ENCODE measurements at regions of chr9 and their contacts with region 1.

Region 1: DNA sequence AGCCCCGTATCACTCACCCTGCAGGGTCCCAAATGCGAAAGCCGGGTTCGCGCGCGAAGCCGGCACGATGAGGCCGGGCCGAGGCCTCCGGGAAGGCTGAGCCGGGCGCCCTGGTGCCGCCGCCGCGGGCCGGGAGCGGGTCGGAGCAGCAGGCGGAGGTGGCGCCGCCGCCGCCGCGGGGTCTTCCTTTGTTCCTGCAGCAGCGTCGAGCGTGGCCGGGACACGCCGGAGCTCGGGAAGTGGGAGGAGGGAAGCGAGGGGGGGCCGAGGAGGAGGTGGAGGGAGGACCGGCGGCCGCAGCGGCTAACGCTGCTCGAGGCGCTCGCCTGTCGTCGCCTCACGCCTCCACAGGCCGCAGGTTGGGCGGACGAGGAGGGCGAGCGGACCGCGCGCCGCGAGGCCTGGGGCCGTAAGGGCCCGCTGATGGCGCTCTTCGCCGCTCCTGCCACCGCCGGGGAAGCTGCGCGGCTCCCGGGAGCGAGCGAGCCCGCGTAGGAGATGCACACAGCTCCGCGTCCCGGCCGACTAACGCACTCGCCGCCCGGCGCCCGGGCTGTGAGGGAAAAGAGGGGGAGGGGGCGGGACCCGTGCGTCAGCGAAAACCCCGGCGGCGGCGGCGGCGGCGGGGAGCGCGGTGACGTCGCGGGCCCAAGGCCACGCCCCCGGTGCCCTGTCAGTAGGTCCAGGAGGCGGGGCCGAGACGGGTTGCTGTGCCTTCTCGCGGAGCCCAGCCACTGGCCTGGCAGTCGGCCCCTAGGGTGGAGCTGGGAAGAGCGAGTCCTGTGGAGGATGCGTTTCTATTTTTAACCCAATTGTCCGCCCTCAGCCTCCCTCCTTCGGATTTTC is at the start of gene ZFAND5:
- DNase-seq: peak; percentile 100
- total RNA-seq, gene ZFAND5: 141 to 175 TPM

Region 2: DNA sequence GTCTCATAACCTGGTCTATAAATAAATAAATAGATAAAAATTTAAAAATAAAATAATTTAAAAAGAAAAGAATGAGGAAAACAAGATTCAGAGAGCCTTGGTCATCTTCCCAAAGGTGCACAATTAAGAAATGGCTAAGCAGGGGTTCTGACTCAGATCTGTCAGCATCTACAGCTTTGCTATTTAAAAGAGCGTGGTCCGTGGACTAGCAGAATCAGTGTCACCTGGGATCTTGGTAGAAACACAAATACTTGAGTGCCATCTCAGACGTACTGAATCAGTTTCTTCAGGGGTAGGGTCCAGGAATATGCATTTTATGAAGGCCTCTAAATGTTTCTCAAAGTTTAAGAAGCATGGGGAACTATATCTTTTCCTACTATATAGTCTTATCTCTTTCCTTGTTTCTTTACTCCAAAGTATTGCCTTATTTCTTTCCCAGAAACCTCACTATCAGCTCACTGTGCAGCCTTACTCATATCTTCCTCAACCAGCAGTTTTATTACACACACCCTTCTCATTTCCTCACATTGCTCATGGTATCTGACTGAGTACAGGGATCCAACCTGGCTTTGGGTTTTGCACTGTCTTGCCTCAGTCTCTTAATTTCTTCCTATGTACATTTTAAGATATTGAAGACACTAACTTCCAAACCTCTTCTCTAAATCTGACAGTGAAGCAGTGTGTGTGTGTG is 215.1 kb after region 1 on chr9:
- intact Hi-C with region 1: loop called in 1 of 2 experiments (anchors 5 kb)
- DNase-seq: no peak

Measured in posterior vena cava (tissue), 2 donors.